H1 (cell line): ENCODE measurements at regions of chr1 and their contacts with region 1.

Region 1: GRCh38 chr1:182604169-182605164 is at the start of gene RGS16:
- DNase-seq: peak in 1 of 2 experiments; percentile 95
- H3K4me3 ChIP-seq: peak within 1 kb of the TSS; percentile 41 to 66 (median 50)
- H3K27ac ChIP-seq: peak within 1 kb of the TSS; percentile 34; the same call in 1 of the 2 replicates
- H3K4me1 ChIP-seq: peaks cover 4 to 19% (median 8%) of the 10 kb centered on the region in 4 experiments
- H3K27me3 ChIP-seq: peaks cover 0 to 31% (median 20%) of the 10 kb centered on the region in 4 experiments; a peak in 6 of 7 replicates
- CTCF ChIP-seq: no peak
- EP300 ChIP-seq: no peak
- POLR2A ChIP-seq: peak; percentile 86 to 87
- RAD21 ChIP-seq: no peak; a peak in 1 of 4 replicates
- total RNA-seq, gene RGS16: 8.1 and 9.8 TPM in 2 replicates

Region 2: GRCh38 chr1:182588500-182589452 is 15.7 kb before region 1 on chr1 and contains the start of gene RNASEL:
- CTCF ChIA-PET with region 1: interaction called, 18 read pairs
- POLR2A ChIA-PET with region 1: interaction called, 4 read pairs
- DNase-seq: peak in 1 of 2 experiments; percentile 68
- H3K4me3 ChIP-seq: peak within 1 kb of the TSS in 3 of 4 experiments; percentile 8 to 55 (median 19); a peak in 4 of 8 replicates
- H3K27ac ChIP-seq: no peak within 1 kb of the TSS
- H3K4me1 ChIP-seq: peaks cover 0 to 12% (median 2%) of the 10 kb centered on the region in 4 experiments; a peak in 4 of 7 replicates
- H3K27me3 ChIP-seq: no peaks in the 10 kb centered on the region
- CTCF ChIP-seq: no peak
- EP300 ChIP-seq: no peak
- POLR2A ChIP-seq: peak in 1 of 2 experiments; percentile 35; a peak in 1 of 3 replicates
- RAD21 ChIP-seq: no peak; a peak in 1 of 4 replicates
- total RNA-seq, gene RNASEL: 0.57 and 0.78 TPM in 2 replicates

Region 3: DNA sequence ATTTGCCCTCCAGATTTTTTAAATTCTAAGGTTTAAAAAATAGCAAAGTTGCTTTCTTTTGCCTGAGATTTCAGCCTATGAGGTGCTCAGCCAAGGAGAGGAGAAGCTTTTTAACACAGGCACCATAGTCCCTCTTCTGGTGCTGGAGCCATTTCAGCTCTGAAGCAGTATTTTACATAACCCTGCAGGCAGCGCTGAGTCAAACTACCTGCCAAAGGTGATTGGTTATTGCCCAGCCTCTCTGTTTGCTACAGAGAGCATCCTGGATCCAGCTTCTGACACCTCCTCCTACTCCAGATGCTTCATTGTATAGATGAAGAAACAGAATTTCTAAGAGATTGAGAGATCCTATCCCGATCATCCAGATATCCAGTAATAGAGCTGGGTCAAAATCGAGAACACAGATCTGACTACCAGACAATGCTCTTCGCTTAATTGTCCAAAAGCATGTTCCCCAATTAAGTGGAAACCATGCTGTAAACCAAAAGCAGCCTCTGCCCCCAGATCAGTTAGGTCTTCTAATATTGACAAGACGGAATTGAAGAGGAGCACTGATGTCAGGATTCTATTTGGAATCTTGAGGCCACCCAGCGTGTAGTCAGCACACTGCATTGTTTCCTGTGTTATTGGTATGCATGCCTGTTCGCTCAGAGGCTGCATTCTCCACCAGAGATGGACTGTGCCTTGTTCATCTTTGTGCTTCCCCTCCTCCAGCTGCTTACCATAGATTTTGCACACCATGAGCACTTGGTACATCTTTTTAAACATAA is 57.8 kb after region 1 on chr1:
- CTCF ChIA-PET with region 1: interaction called, 28 read pairs
- POLR2A ChIA-PET with region 1: interaction called, 10 read pairs
- DNase-seq: no peak
- H3K4me3 ChIP-seq: peak overlapping the region in 1 of 4 experiments; percentile 35; a peak in 2 of 8 replicates
- H3K27ac ChIP-seq: no peak overlapping the region
- H3K4me1 ChIP-seq: peaks cover 5 to 21% (median 17%) of the 10 kb centered on the region in 4 experiments; a peak in 6 of 7 replicates
- H3K27me3 ChIP-seq: peaks cover 0 to 3% (median 0%) of the 10 kb centered on the region in 4 experiments; a peak in 2 of 7 replicates
- CTCF ChIP-seq: no peak
- EP300 ChIP-seq: no peak
- POLR2A ChIP-seq: no peak
- RAD21 ChIP-seq: no peak; a peak in 1 of 4 replicates

Region 4: GRCh38 chr1:182674346-182675246 is 70.1 kb after region 1 on chr1:
- CTCF ChIA-PET with region 1: interaction called, 10 read pairs
- POLR2A ChIA-PET with region 1: interaction called, 4 read pairs
- DNase-seq: no peak
- H3K4me3 ChIP-seq: no peak overlapping the region
- H3K27ac ChIP-seq: no peak overlapping the region
- H3K4me1 ChIP-seq: peaks cover 6 to 15% (median 7%) of the 10 kb centered on the region in 4 experiments
- H3K27me3 ChIP-seq: peaks cover 0 to 4% (median 0%) of the 10 kb centered on the region in 4 experiments; a peak in 1 of 7 replicates
- CTCF ChIP-seq: no peak
- EP300 ChIP-seq: no peak
- POLR2A ChIP-seq: no peak
- RAD21 ChIP-seq: no peak; a peak in 1 of 4 replicates

Region 5: GRCh38 chr1:182699393-182700350 is 95.2 kb after region 1 on chr1:
- CTCF ChIA-PET with region 1: interaction called, 44 read pairs
- POLR2A ChIA-PET with region 1: interaction called, 10 read pairs
- DNase-seq: peak; percentile 50 to 86
- H3K4me3 ChIP-seq: peak overlapping the region; percentile 16 to 53 (median 27); a peak in 7 of 8 replicates
- H3K27ac ChIP-seq: peak overlapping the region; percentile 59
- H3K4me1 ChIP-seq: peaks cover 10 to 32% (median 16%) of the 10 kb centered on the region in 4 experiments
- H3K27me3 ChIP-seq: no peaks in the 10 kb centered on the region
- CTCF ChIP-seq: no peak
- EP300 ChIP-seq: no peak; a peak in 1 of 3 replicates
- POLR2A ChIP-seq: peak in 1 of 2 experiments; percentile 49; a peak in 1 of 3 replicates
- RAD21 ChIP-seq: peak in 1 of 2 experiments; percentile 38; a peak in 2 of 4 replicates

Region 6: DNA sequence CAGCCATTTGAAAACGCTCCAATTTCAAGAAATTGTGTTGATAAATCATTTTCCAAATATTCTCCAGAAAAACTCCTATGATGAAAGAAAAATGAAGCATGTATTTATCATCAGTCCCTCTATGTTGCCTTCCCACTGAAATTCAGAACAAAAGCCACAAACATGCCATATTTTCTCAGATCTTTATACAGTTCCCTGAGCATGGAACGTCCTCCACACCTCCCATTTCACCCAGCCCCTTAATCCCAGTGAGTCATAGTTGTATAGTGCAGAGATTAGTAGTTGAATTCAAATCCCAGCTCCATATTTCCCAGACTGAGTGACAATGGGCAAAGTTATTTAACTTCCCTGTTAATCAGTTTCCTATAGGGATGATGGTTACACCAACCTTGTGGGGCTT is 164.5 kb after region 1 on chr1:
- CTCF ChIA-PET with region 1: interaction called, 23 read pairs
- POLR2A ChIA-PET with region 1: interaction called, 10 read pairs
- DNase-seq: no peak
- H3K4me3 ChIP-seq: no peak overlapping the region
- H3K27ac ChIP-seq: no peak overlapping the region
- H3K4me1 ChIP-seq: peaks cover 0 to 8% (median 4%) of the 10 kb centered on the region in 4 experiments; a peak in 4 of 7 replicates
- H3K27me3 ChIP-seq: peaks cover 0 to 1% (median 0%) of the 10 kb centered on the region in 4 experiments; a peak in 1 of 7 replicates
- CTCF ChIP-seq: no peak
- EP300 ChIP-seq: no peak
- POLR2A ChIP-seq: no peak
- RAD21 ChIP-seq: no peak

Region 7: GRCh38 chr1:182789138-182790076 is 184.9 kb after region 1 on chr1 and contains the start of gene NPL:
- CTCF ChIA-PET with region 1: interaction called, 1,131 read pairs
- POLR2A ChIA-PET with region 1: interaction called, 166 read pairs
- DNase-seq: peak in 1 of 2 experiments; percentile 87
- H3K4me3 ChIP-seq: peak within 1 kb of the TSS; percentile 46 to 65 (median 56)
- H3K27ac ChIP-seq: no peak within 1 kb of the TSS
- H3K4me1 ChIP-seq: no peaks in the 10 kb centered on the region
- H3K27me3 ChIP-seq: peaks cover 15 to 36% (median 24%) of the 10 kb centered on the region in 4 experiments
- CTCF ChIP-seq: no peak
- EP300 ChIP-seq: peak in 1 of 2 experiments; percentile 20; a peak in 1 of 3 replicates
- POLR2A ChIP-seq: peak in 1 of 2 experiments; percentile 69; a peak in 2 of 3 replicates
- RAD21 ChIP-seq: 0 out of 4 replicates have a peak, but pooled peaks of 1 of the 2 experiments have one; percentile 2
- total RNA-seq, gene NPL: 2.3 and 4.4 TPM in 2 replicates